T-cell (primary cell): ENCODE measurements at regions of chr2 and their contacts with region 1.

Region 1: DNA sequence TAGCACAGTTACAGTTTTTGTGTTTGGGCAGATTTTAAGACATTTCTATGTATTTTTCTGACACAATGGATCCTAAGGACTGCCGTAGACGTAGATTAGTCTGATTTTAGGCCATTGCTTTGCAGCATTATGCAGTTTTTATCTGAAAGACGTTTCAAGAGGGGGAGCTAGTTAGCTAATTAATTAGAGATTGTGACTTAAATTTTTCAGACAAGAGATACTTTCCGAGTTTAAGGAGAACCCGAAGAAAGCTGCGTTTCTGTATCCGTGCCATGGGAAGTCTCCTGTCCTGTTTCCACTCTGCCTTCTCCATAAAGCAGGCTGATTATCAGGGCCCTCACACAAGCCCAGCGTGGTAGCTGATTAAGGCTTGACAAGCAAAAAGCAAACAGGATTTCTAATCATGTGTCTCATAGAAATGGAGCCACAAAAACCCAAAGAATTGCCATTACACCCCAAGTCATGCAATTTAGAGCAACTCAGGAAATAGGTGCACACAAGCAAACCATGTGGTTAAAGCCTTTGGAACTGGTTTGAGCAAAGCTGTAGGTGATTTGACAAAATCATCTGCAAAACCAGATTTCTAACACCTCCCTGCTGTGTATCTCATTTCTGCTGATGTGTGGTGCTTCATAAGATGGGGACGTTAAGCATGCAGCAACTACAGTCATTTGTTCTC is 808.1 kb downstream of the RNF144A start:
- DNase-seq: peak in 22 of 35 experiments; percentile 9 to 79 (median 22)
- ATAC-seq: peak; percentile 70 to 85 (median 80)
- H3K4me3 ChIP-seq: peak overlapping the region in 1 of 2 donors; percentile 45
- H3K4me3 Mint-ChIP-seq: peak overlapping the region; percentile 53 to 79 (median 73)
- H3K27ac ChIP-seq: peak overlapping the region; percentile 67
- H3K27ac Mint-ChIP-seq: peak overlapping the region; percentile 76 to 81
- H3K4me1 ChIP-seq: peaks cover 10 to 60% of the 10 kb centered on the region in 2 experiments
- H3K4me1 Mint-ChIP-seq: peaks cover 50 to 63% (median 52%) of the 10 kb centered on the region in 3 donors
- H3K27me3 ChIP-seq: no peaks in the 10 kb centered on the region
- H3K27me3 Mint-ChIP-seq: no peaks in the 10 kb centered on the region

Region 2: DNA sequence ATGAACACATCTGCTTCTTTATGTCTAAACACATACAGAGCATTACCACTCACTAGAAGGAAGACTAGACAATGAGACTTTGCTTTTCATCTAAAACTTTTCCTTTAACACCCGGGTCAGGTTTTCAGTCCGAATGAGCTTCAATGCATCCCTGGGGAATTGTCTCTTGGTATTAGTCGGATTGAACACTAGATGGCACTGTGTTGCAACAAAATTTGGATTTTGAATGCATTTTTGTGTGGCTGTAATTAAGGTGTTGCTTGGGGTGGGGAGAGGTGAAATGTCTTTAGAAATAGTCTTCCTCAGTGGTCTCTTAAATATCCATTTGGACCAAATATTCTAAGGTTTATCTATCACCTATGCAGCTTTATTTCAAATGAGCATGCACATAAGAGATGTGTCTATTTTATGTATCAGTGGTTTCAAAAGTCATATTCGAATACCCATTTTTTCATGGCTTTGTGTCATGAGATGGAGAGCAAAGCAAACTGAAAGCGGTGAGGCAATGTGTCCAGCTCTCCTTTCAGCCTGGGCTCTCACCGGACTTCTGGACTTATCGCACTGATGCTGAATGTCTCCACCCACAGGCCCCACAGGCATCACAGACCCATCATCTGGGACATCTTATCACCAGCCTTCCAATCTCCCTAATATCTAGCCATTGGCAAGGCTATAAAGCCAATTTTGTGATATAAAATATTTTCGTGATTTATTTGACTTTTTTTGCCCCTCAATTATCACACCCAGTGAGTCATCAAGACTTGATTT is 297.8 kb before region 1 on chr2:
- CTCF ChIA-PET with region 1: interaction called in 1 of 2 experiments, 11 read pairs
- POLR2A ChIA-PET with region 1: no interaction called
- DNase-seq: peak in 5 of 35 experiments; percentile 6 to 82 (median 40)
- ATAC-seq: peak; percentile 21 to 54 (median 38)
- H3K4me3 ChIP-seq: no peak overlapping the region
- H3K4me3 Mint-ChIP-seq: peak overlapping the region in 2 of 3 donors; percentile 0 to 4
- H3K27ac ChIP-seq: peak overlapping the region; percentile 10
- H3K27ac Mint-ChIP-seq: peak overlapping the region; percentile 41 to 67
- H3K4me1 ChIP-seq: peaks cover 29 to 47% of the 10 kb centered on the region in 2 experiments
- H3K4me1 Mint-ChIP-seq: peaks cover 38 to 41% (median 41%) of the 10 kb centered on the region in 3 donors
- H3K27me3 ChIP-seq: no peaks in the 10 kb centered on the region
- H3K27me3 Mint-ChIP-seq: peaks cover 5 to 6% of the 10 kb centered on the region in 2 donors

Region 3: GRCh38 chr2:7748717-7749415 is 23.6 kb after region 1 on chr2:
- CTCF ChIA-PET with region 1: interaction called in 1 of 2 experiments, 10 read pairs
- POLR2A ChIA-PET with region 1: interaction called in 1 of 2 experiments, 5 read pairs
- DNase-seq: peak in 18 of 35 experiments; percentile 12 to 64 (median 28)
- ATAC-seq: peak in 3 of 4 experiments; percentile 47 to 74 (median 60)
- H3K4me3 ChIP-seq: peak overlapping the region in 1 of 2 donors; percentile 26
- H3K4me3 Mint-ChIP-seq: no peak overlapping the region
- H3K27ac ChIP-seq: peak overlapping the region; percentile 83
- H3K27ac Mint-ChIP-seq: peak overlapping the region in 1 of 2 donors; percentile 55
- H3K4me1 ChIP-seq: peaks cover 0 to 22% of the 10 kb centered on the region in 2 experiments
- H3K4me1 Mint-ChIP-seq: peaks cover 0 to 33% (median 26%) of the 10 kb centered on the region in 3 donors
- H3K27me3 ChIP-seq: no peaks in the 10 kb centered on the region
- H3K27me3 Mint-ChIP-seq: no peaks in the 10 kb centered on the region